Calu3 (cell line): ENCODE measurements at regions of chr1 and their contacts with region 1.

Region 1: GRCh38 chr1:10507111-10507879 is 32.5 kb downstream of the PEX14 start:
- DNase-seq: peak; percentile 38
- H3K4me3 Mint-ChIP-seq: no peak overlapping the region
- H3K27ac Mint-ChIP-seq: no peak overlapping the region
- H3K4me1 Mint-ChIP-seq: peaks cover 19% of the 10 kb centered on the region
- H3K27me3 Mint-ChIP-seq: no peaks in the 10 kb centered on the region
- CTCF ChIP-seq: peak; percentile 57

Region 2: DNA sequence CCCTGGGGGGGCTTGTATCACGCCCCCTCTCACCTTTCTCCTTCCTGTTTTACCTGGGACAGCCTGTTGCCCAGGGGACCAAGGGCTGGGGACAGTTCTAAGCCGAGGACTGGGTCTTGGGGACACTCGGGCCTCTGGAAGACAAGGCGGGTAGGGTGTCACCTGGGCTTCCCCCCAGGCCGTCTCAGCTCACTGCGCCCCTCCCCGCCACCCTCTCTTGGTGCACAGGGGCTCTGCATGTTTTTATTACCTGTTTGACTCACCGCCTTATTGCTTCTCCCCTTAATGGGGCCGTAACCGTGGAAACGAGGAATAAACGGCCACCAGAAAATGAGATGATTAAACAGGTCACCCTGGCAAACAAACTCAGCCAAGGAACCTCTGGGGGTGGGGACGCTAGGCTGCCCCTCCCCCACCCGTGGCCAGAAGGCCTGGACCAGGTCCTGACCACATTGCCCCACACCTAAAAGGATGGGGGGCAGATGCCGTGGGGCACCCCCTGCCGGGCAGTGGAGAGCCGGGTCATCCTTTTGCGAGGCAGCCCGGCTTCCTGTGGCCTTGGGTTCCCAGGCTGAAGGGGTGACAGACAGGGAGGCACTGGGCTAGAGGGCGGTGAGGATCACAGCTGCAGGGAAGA is 179.2 kb after region 1 on chr1:
- CTCF ChIA-PET with region 1: interaction called, 3 read pairs
- intact Hi-C with region 1: loop called (anchors 2 kb)
- DNase-seq: peak; percentile 47
- H3K4me3 Mint-ChIP-seq: no peak overlapping the region
- H3K27ac Mint-ChIP-seq: peak overlapping the region; percentile 48
- H3K4me1 Mint-ChIP-seq: peaks cover 21% of the 10 kb centered on the region
- H3K27me3 Mint-ChIP-seq: no peaks in the 10 kb centered on the region
- CTCF ChIP-seq: no peak

Region 3: GRCh38 chr1:10796019-10796944 is 289.0 kb after region 1 on chr1 and contains the start of gene CASZ1:
- CTCF ChIA-PET with region 1: no interaction called
- intact Hi-C with region 1: loop called (anchors 10 kb)
- DNase-seq: peak; percentile 85
- H3K4me3 Mint-ChIP-seq: peak within 1 kb of the TSS; percentile 81
- H3K27ac Mint-ChIP-seq: no peak within 1 kb of the TSS
- H3K4me1 Mint-ChIP-seq: peaks cover 7% of the 10 kb centered on the region
- H3K27me3 Mint-ChIP-seq: peaks cover 29% of the 10 kb centered on the region
- CTCF ChIP-seq: no peak
- total RNA-seq, gene CASZ1: 12.6 and 16.5 TPM in 2 replicates

Region 4: DNA sequence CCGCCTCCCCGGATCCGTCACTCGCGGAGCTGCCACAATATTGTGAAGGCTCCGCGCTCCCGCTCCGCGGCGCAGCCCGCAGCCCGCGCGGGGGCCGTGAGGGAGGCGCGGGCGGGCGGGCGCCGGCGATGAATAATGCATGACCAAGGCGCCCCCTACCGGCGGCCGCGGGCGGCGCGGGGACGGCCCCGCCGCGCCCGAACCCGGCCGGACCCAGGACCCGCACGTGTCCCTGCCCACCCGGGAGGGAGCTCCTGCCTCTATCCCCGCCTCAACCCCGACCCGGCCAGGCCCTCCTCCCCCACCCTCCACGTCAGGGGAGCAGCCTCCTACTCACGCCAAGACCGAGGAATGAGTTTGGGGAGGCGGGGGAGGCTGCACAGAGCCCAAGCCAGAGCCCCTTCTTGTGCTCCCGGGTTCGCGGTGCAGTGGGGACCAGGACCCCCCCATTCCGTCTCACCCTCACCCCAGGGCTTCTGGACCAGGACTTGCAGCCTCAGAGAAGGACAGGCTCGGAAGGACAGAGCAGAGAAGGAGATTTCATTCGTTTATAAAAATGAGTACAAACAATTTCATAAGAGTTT is 359.9 kb after region 1 on chr1:
- CTCF ChIA-PET with region 1: interaction called, 4 read pairs
- intact Hi-C with region 1: loop called (anchors 2 kb)
- DNase-seq: peak; percentile 66
- H3K4me3 Mint-ChIP-seq: peak overlapping the region; percentile 34
- H3K27ac Mint-ChIP-seq: no peak overlapping the region
- H3K4me1 Mint-ChIP-seq: peaks cover 10% of the 10 kb centered on the region
- H3K27me3 Mint-ChIP-seq: peaks cover 58% of the 10 kb centered on the region
- CTCF ChIP-seq: peak; percentile 55

Region 5: DNA sequence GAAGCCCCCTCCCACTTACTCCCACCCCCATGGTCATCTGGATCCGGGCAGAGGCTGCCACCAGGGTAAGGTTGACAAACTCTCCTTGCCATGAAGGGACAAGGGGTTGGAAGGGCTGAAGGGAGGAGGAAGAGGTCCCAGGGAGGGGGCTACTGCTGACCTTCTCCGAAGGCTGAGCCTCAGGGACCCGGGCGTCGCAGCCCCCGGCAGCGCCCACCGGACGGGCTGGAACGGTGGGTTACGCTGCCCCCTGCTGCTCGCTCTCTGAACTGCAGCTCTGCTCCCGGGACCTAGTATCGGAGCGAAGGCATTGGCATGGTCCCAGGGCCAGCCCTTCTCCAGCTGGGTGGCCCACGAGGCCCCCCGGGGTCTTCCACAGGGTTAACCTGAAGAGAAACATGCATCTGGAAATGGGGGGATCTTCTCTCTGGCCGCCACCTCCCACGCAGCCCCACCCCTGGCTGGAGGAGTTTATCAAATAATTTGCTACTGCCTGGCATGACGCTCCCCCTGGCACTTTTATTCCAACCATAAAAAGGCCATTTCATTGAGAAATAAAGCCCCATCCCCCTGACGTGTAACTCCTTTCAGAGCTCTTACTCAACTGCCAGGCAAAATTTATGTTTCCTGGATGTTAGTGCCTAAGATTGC is 434.7 kb after region 1 on chr1:
- CTCF ChIA-PET with region 1: interaction called, 5 read pairs
- intact Hi-C with region 1: loop called (anchors 10 kb)
- DNase-seq: peak; percentile 62
- H3K4me3 Mint-ChIP-seq: no peak overlapping the region
- H3K27ac Mint-ChIP-seq: no peak overlapping the region
- H3K4me1 Mint-ChIP-seq: peaks cover 8% of the 10 kb centered on the region
- H3K27me3 Mint-ChIP-seq: peaks cover 24% of the 10 kb centered on the region
- CTCF ChIP-seq: peak; percentile 92